ENCODE measurements at regions of chr1 and their contacts with region 1.

Region 1: DNA sequence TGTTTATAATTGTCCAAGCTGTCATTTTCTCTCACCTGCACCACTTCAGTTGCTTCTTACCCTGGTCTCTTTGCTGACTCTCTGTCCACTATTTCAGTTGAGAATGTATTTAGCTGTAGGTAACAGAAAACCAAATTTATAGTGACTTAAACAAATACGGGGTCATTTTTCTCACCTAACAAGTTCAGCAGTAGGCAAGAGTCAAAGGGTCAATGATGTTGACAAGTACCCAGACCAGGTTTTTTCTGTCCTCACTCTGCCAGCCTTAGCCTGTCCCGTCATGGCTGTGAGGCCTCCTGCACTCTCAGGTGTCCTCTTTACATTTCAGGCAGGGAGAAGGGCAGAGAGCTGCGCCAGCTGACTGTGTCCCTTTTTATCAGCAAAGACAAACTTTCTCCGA is 11.8 kb downstream of the RIIAD1 start:
- DNase-seq: no peak
- H3K4me3 Mint-ChIP-seq: no peak overlapping the region
- H3K27ac Mint-ChIP-seq: no peak overlapping the region
- H3K4me1 Mint-ChIP-seq: no peaks in the 10 kb centered on the region
- H3K27me3 Mint-ChIP-seq: peaks cover 37% of the 10 kb centered on the region

Region 2: GRCh38 chr1:151594143-151594625 is 138.9 kb before region 1 on chr1:
- CTCF ChIA-PET with region 1: interaction called, 23 read pairs
- DNase-seq: peak; percentile 92
- H3K4me3 Mint-ChIP-seq: peak overlapping the region; percentile 22
- H3K27ac Mint-ChIP-seq: no peak overlapping the region
- H3K4me1 Mint-ChIP-seq: peaks cover 11% of the 10 kb centered on the region
- H3K27me3 Mint-ChIP-seq: peaks cover 12% of the 10 kb centered on the region

Region 3: DNA sequence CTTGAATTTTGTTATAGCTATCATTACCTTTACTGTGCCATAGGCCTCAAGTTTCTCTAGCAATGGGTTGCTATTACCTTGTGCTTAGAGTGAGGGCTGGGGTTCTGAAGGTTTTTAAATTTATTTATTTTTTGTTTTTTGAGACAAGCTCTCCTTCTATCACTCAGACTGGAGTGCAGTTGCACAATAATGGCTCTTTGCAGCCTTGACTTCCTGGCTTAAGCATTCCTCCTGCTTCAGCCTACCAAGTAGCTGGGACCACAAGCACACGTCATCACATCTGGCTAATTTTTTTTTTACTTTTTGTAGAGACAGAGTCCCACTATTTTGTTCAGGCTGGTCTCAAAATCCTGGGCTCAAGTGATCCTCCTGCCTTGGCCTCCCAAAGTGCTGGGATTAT is 79.7 kb before region 1 on chr1:
- CTCF ChIA-PET with region 1: no interaction called
- DNase-seq: no peak
- H3K4me3 Mint-ChIP-seq: no peak overlapping the region
- H3K27ac Mint-ChIP-seq: no peak overlapping the region
- H3K4me1 Mint-ChIP-seq: peaks cover 20% of the 10 kb centered on the region
- H3K27me3 Mint-ChIP-seq: no peaks in the 10 kb centered on the region

Region 4: GRCh38 chr1:151762941-151763921 is 30.1 kb after region 1 on chr1 and contains the start of gene MRPL9:
- CTCF ChIA-PET with region 1: no interaction called
- DNase-seq: peak; percentile 90
- H3K4me3 Mint-ChIP-seq: peak within 1 kb of the TSS; percentile 81
- H3K27ac Mint-ChIP-seq: peak within 1 kb of the TSS; percentile 95
- H3K4me1 Mint-ChIP-seq: peaks cover 45% of the 10 kb centered on the region
- H3K27me3 Mint-ChIP-seq: no peaks in the 10 kb centered on the region

Measured in activated naive CD4-positive, alpha-beta T cell treated with anti-CD3 and anti-CD28 coated beads, Interleukin-2, amount 10 ng/mL, durations not matched to agents 7 days and 5 days (primary cell).